ENCODE measurements at regions of chr11 and their contacts with region 1.

Region 1: DNA sequence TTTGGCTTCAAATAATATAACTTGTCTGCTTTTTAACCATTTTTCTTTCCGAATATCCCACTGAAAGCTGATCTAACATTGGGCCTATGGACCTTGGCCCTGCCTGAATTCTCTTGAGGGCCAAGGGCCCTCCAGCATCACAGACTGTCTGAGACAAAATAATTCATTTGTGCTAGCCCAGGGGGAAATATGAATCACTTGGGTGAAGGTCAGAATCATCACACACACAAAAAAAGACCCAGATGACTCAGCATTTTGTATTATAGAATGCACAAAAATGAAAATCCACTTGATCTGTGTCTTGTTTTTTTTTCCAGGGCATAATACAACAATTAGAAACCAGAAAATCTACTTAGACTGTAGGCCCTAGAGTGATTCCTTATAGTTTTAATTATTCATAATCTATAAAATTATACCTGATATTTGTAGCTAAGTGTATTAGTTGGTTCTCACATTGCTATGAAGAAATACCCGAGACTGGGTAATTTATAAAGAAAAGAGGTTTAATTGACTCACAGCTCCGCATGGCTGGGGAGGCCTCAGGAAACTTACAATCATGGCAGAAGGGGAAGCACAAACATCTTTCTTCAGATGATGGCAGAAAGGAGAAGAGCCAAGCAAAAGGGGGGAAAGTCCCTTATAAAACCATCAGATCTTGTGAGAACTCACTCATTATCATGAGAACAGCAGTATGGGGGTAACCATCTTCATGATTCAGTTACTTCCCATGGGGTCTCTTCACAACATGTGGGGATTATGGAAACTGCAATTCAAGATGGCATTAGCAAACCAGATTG is 15.6 kb upstream of the RDX start:
- DNase-seq: peak; percentile 41
- H3K4me3 Mint-ChIP-seq: no peak overlapping the region
- H3K27ac Mint-ChIP-seq: peak overlapping the region; percentile 69
- H3K4me1 Mint-ChIP-seq: peaks cover 15% of the 10 kb centered on the region
- H3K27me3 Mint-ChIP-seq: no peaks in the 10 kb centered on the region

Region 2: GRCh38 chr11:109728056-109728455 is 583.9 kb before region 1 on chr11:
- CTCF ChIA-PET with region 1: no interaction called
- POLR2A ChIA-PET with region 1: no interaction called
- intact Hi-C with region 1: no loop called
- DNase-seq: no peak
- H3K4me3 Mint-ChIP-seq: no peak overlapping the region
- H3K27ac Mint-ChIP-seq: no peak overlapping the region
- H3K4me1 Mint-ChIP-seq: no peaks in the 10 kb centered on the region
- H3K27me3 Mint-ChIP-seq: no peaks in the 10 kb centered on the region

Region 3: DNA sequence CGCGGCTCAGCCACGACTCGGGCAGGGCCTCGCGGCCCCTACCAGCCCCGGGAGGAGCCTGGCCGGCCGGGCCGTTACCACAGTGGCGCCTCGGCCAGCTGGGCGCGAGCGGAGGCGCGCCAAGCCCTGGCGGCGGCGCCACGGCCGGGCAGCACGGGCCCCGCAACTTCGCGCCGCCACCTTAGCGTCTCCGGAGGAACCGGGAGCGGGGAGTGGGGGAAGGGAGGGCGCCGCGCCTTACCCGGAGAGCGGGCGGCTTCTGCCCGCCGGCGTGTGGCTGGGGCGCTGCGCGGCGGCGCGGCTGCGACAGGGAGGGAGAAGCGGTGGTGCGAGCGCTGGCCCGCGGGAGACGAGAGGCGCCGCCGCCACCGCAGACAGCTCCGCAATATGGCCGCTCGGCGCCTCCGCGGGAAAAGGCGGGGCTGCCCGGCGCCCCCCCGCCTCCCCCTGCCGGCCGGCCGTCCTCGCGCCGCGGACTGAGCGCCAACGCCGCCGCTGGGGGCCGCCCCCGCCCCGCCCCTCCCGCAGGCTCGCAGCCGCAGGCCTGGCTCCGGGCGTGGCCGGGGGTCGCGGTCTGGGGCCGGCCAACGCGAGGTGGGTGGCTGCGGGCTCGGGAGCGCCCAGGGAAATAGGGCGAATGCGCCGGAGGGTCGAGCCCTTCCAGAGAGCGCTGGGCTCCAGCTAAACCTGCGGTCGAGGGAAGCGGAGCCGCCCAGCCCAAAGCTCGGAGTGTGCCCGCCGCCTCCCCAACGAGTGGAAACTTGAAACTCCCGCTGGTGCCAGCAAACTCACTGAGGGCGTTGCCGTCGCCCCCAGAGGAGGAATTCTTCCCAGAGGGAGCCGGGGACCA is 15.5 kb before region 1 on chr11 and contains the start of gene RDX:
- CTCF ChIA-PET with region 1: no interaction called
- POLR2A ChIA-PET with region 1: no interaction called
- intact Hi-C with region 1: loop called (anchors 1 kb)
- DNase-seq: peak; percentile 69
- H3K4me3 Mint-ChIP-seq: peak within 1 kb of the TSS; percentile 85
- H3K27ac Mint-ChIP-seq: peak within 1 kb of the TSS; percentile 78
- H3K4me1 Mint-ChIP-seq: peaks cover 41% of the 10 kb centered on the region
- H3K27me3 Mint-ChIP-seq: no peaks in the 10 kb centered on the region
- total RNA-seq, gene RDX: 47.9 to 56.2 TPM

Measured in activated CD4-positive, alpha-beta memory T cell treated with anti-CD3 and anti-CD28 coated beads for 36 hours (primary cell).